ENCODE measurements at regions of chr21 and their contacts with region 1.

Region 1: DNA sequence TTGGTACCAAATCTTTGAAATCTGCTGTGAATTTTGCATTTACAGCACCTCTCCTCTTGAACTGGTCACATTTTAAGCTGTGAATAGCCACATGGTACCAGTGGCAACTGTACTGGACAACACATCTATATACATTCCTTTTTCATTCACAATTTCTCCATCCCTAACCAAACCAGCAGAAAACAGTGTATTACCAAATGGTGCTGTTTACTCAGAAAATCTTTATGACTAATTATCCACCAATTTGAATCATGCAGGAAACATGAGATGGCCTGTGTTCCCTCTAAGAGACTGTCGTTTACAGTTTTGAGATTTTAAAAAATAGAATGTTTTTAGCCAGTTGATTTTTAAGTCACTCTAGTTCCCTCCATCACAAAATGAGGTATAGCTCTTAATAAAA is 17.6 kb upstream of the CCT8 start:
- DNase-seq: no peak
- ATAC-seq: no peak
- H3K4me3 ChIP-seq: no peak overlapping the region
- H3K27ac ChIP-seq: no peak overlapping the region
- H3K4me1 ChIP-seq: peaks cover 17% of the 10 kb centered on the region
- H3K27me3 ChIP-seq: peaks cover 0 to 4% of the 10 kb centered on the region in 2 experiments; a peak in 1 of 5 replicates
- CTCF ChIP-seq: no peak
- EP300 ChIP-seq: no peak
- POLR2A ChIP-seq: no peak
- RAD21 ChIP-seq: no peak

Region 2: GRCh38 chr21:29164325-29164942 is 73.4 kb after region 1 on chr21:
- CTCF ChIA-PET with region 1: no interaction called
- POLR2A ChIA-PET with region 1: no interaction called
- in situ Hi-C with region 1: no loop called
- intact Hi-C with region 1: no loop called
- DNase-seq: peak; percentile 63
- ATAC-seq: peak; percentile 82
- H3K4me3 ChIP-seq: no peak overlapping the region
- H3K27ac ChIP-seq: no peak overlapping the region
- H3K4me1 ChIP-seq: no peaks in the 10 kb centered on the region
- H3K27me3 ChIP-seq: no peaks in the 10 kb centered on the region
- CTCF ChIP-seq: peak; percentile 72
- EP300 ChIP-seq: no peak
- POLR2A ChIP-seq: no peak
- RAD21 ChIP-seq: peak; percentile 68; the same call in 1 of the 2 replicates

Region 3: DNA sequence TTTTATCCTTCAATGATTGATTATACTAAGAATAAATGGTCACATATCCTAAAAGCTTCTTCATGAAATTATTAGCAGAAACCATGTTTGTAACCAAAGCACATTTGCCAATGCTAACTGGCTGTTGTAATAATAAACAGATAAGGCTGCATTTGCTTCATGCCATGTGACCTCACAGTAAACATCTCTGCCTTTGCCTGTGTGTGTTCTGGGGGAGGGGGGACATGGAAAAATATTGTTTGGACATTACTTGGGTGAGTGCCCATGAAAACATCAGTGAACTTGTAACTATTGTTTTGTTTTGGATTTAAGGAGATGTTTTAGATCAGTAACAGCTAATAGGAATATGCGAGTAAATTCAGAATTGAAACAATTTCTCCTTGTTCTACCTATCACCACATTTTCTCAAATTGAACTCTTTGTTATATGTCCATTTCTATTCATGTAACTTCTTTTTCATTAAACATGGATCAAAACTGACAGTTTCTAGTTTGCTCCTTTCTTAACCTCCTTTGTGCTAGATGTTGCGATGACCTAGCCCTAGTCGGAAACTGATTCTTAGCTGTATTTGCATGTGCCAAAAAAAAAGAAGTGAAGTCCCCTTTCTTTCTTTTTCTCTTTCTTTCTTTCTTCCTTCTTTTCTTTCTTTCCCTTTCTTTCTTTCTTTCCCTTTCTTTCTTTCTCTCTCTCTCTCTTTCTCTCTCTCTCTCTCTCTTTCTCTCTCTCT is 84.5 kb after region 1 on chr21:
- CTCF ChIA-PET with region 1: no interaction called
- POLR2A ChIA-PET with region 1: no interaction called
- in situ Hi-C with region 1: no loop called
- intact Hi-C with region 1: no loop called
- DNase-seq: peak; percentile 77
- ATAC-seq: peak; percentile 67; the same call in 2 of the 3 replicates
- H3K4me3 ChIP-seq: no peak overlapping the region
- H3K27ac ChIP-seq: no peak overlapping the region
- H3K4me1 ChIP-seq: peaks cover 12% of the 10 kb centered on the region
- H3K27me3 ChIP-seq: no peaks in the 10 kb centered on the region
- CTCF ChIP-seq: no peak
- EP300 ChIP-seq: no peak; a peak in 1 of 4 replicates
- POLR2A ChIP-seq: no peak
- RAD21 ChIP-seq: no peak

Region 4: DNA sequence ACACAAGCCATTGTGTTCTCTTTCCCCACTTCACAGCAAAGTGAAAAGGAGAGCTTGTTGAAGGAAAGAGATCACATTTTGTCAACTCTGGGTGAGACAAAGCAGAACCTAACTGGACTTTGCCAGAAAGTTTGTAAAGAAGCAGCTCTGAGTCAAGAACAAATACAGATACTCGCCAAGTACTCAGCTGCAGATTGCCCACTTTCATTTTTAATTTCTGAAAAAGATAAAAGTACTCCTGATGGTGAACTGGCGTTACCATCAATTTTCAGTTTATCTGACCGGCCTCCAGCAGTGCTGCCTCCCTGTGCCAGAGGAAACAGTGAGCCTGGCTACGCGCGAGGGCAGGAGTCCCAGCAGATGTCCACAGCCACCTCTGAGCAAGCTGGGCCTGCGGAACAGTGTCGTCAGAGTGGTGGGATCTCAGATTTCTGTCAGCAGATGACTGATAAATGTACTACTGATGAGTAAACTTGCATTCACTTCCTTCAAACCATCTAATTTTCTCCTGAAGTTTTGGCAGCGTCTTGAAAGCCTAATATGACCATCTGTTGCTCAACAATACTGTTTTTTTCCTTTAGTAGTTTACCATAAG is 251.4 kb after region 1 on chr21:
- CTCF ChIA-PET with region 1: interaction called, 11 read pairs
- POLR2A ChIA-PET with region 1: no interaction called
- in situ Hi-C with region 1: no loop called
- intact Hi-C with region 1: no loop called
- DNase-seq: no peak
- ATAC-seq: no peak
- H3K4me3 ChIP-seq: no peak overlapping the region
- H3K27ac ChIP-seq: no peak overlapping the region
- H3K4me1 ChIP-seq: peaks cover 14% of the 10 kb centered on the region
- H3K27me3 ChIP-seq: no peaks in the 10 kb centered on the region
- CTCF ChIP-seq: no peak
- EP300 ChIP-seq: no peak
- POLR2A ChIP-seq: no peak
- RAD21 ChIP-seq: no peak

Region 5: GRCh38 chr21:29372063-29372802 is 281.2 kb after region 1 on chr21:
- CTCF ChIA-PET with region 1: interaction called, 21 read pairs
- POLR2A ChIA-PET with region 1: no interaction called
- in situ Hi-C with region 1: loop called (anchors 5 kb)
- intact Hi-C with region 1: loop called (anchors 1 kb)
- DNase-seq: peak; percentile 78
- ATAC-seq: peak; percentile 94
- H3K4me3 ChIP-seq: no peak overlapping the region
- H3K27ac ChIP-seq: no peak overlapping the region
- H3K4me1 ChIP-seq: no peaks in the 10 kb centered on the region
- H3K27me3 ChIP-seq: no peaks in the 10 kb centered on the region
- CTCF ChIP-seq: peak; percentile 82
- EP300 ChIP-seq: no peak
- POLR2A ChIP-seq: no peak
- RAD21 ChIP-seq: peak; percentile 69

Region 6: GRCh38 chr21:29477941-29478340 is 386.9 kb after region 1 on chr21:
- CTCF ChIA-PET with region 1: no interaction called
- POLR2A ChIA-PET with region 1: no interaction called
- in situ Hi-C with region 1: no loop called
- intact Hi-C with region 1: loop called (anchors 10 kb)
- DNase-seq: no peak
- ATAC-seq: no peak
- H3K4me3 ChIP-seq: no peak overlapping the region
- H3K27ac ChIP-seq: no peak overlapping the region
- H3K4me1 ChIP-seq: peaks cover 21% of the 10 kb centered on the region
- H3K27me3 ChIP-seq: no peaks in the 10 kb centered on the region
- CTCF ChIP-seq: no peak
- EP300 ChIP-seq: no peak
- POLR2A ChIP-seq: no peak
- RAD21 ChIP-seq: no peak

Region 7: GRCh38 chr21:29499734-29500343 is 408.8 kb after region 1 on chr21:
- CTCF ChIA-PET with region 1: interaction called, 4 read pairs
- POLR2A ChIA-PET with region 1: no interaction called
- in situ Hi-C with region 1: no loop called
- intact Hi-C with region 1: loop called (anchors 1 kb)
- DNase-seq: peak; percentile 50
- ATAC-seq: peak; percentile 98
- H3K4me3 ChIP-seq: no peak overlapping the region
- H3K27ac ChIP-seq: no peak overlapping the region
- H3K4me1 ChIP-seq: no peaks in the 10 kb centered on the region
- H3K27me3 ChIP-seq: no peaks in the 10 kb centered on the region
- CTCF ChIP-seq: peak; percentile 62
- EP300 ChIP-seq: no peak
- POLR2A ChIP-seq: no peak
- RAD21 ChIP-seq: peak; percentile 60; the same call in 1 of the 2 replicates

Measured in HepG2 (cell line).